Breast epithelium (tissue), 4 donors: ENCODE measurements at regions of chr9 and their contacts with region 1.

Region 1: GRCh38 chr9:133654736-133655657 is 18.8 kb downstream of the DBH start:
- DNase-seq: no peak
- H3K4me3 ChIP-seq: no peak overlapping the region
- H3K27ac ChIP-seq: no peak overlapping the region
- H3K4me1 ChIP-seq: peaks cover 0 to 2% of the 10 kb centered on the region in 2 donors
- H3K27me3 ChIP-seq: peaks cover 9 to 66% of the 10 kb centered on the region in 2 donors
- CTCF ChIP-seq: no peak
- POLR2A ChIP-seq: no peak

Region 2: DNA sequence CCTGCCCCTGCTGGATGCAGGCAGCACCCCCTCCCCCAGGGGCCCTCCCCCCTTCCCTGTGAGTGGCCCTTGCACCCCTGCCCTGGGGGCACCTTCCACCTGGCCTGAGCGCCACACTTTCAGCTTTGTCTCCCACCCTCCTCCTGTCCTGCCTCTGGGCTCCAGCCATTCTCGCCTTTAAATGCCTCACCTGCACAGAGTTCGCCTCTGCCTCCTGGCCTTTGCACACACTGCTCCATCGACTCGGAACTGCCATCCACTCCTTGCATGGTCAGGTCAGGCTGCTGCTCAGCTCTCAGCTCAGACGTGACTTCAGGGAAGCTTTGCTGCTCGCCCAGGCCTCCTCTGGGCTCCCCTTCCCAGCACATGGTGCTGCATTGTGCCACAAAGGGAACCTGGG is 56.0 kb before region 1 on chr9:
- intact Hi-C with region 1: loop called (anchors 2 kb)
- DNase-seq: no peak
- H3K4me3 ChIP-seq: no peak overlapping the region
- H3K27ac ChIP-seq: no peak overlapping the region
- H3K4me1 ChIP-seq: no peaks in the 10 kb centered on the region
- H3K27me3 ChIP-seq: peaks cover 0 to 30% of the 10 kb centered on the region in 2 donors
- CTCF ChIP-seq: no peak
- POLR2A ChIP-seq: no peak

Region 3: GRCh38 chr9:133683586-133684120 is 28.7 kb after region 1 on chr9:
- intact Hi-C with region 1: no loop called
- DNase-seq: no peak
- H3K4me3 ChIP-seq: no peak overlapping the region
- H3K27ac ChIP-seq: peak overlapping the region in 1 of 2 donors; percentile 44
- H3K4me1 ChIP-seq: peaks cover 0 to 2% of the 10 kb centered on the region in 2 donors
- H3K27me3 ChIP-seq: no peaks in the 10 kb centered on the region
- CTCF ChIP-seq: no peak
- POLR2A ChIP-seq: no peak